Activated naive CD4-positive, alpha-beta T cell treated with anti-CD3 and anti-CD28 coated beads for 36 hours (primary cell): ENCODE measurements at regions of chr1 and their contacts with region 1.

Region 1: DNA sequence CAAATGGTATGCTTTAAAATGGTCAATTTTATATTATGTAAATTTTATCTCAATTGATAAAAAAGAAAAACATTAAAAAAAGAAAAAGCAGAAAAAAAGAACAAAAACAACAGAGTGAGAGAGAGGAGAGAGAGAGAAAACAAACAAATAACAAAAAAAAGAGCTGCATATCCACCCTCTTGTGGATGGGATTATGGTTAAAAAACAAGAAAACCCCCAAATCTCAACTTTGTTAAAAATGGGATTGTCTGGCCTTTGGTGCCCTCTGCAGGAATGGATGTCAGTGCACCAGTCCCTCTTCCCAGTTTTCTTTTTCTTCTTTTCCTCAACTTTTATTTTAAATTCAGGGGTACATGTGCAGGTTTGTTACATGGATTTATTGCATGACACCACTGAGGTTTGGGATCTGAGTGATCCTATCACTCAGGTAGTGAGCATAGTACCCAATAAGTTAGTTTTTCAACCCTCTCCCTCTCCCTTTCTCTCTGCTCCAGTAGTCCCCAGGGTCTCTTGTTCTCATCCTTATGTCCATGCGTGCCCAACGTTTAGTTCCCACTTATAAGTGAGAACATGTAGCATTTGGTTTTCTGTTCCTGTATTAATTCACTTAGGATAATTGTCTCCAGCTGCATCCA is 28.1 kb downstream of the RNF187 start:
- DNase-seq: peak; percentile 60
- H3K4me3 Mint-ChIP-seq: no peak overlapping the region
- H3K27ac Mint-ChIP-seq: no peak overlapping the region
- H3K4me1 Mint-ChIP-seq: peaks cover 4% of the 10 kb centered on the region
- H3K27me3 Mint-ChIP-seq: peaks cover 2% of the 10 kb centered on the region

Region 2: GRCh38 chr1:227999056-227999930 is 516.0 kb before region 1 on chr1:
- CTCF ChIA-PET with region 1: no interaction called
- intact Hi-C with region 1: loop called (anchors 2 kb)
- DNase-seq: peak; percentile 86
- H3K4me3 Mint-ChIP-seq: no peak overlapping the region
- H3K27ac Mint-ChIP-seq: no peak overlapping the region
- H3K4me1 Mint-ChIP-seq: no peaks in the 10 kb centered on the region
- H3K27me3 Mint-ChIP-seq: peaks cover 26% of the 10 kb centered on the region

Region 3: DNA sequence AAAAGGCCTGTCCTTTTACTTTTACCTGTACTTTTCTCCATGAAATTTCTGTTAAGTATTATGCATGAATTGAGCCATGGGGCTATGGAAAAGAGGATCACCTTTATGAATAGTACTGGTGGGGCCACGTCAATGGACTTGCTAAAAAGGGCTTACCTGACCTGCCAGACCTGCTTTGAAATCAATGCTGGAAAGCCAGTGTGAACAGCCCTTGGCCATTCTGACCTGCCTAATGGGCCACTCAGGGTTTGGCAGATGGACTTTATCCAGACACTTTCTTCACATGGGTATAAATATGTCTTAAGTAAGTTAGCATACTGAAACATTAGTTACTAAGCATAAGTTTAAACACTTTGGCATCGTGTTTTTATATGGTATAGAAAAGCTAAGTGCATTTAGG is 383.6 kb before region 1 on chr1:
- CTCF ChIA-PET with region 1: no interaction called
- intact Hi-C with region 1: loop called (anchors 1 kb)
- DNase-seq: no peak
- H3K4me3 Mint-ChIP-seq: no peak overlapping the region
- H3K27ac Mint-ChIP-seq: no peak overlapping the region
- H3K4me1 Mint-ChIP-seq: peaks cover 3% of the 10 kb centered on the region
- H3K27me3 Mint-ChIP-seq: peaks cover 10% of the 10 kb centered on the region

Region 4: DNA sequence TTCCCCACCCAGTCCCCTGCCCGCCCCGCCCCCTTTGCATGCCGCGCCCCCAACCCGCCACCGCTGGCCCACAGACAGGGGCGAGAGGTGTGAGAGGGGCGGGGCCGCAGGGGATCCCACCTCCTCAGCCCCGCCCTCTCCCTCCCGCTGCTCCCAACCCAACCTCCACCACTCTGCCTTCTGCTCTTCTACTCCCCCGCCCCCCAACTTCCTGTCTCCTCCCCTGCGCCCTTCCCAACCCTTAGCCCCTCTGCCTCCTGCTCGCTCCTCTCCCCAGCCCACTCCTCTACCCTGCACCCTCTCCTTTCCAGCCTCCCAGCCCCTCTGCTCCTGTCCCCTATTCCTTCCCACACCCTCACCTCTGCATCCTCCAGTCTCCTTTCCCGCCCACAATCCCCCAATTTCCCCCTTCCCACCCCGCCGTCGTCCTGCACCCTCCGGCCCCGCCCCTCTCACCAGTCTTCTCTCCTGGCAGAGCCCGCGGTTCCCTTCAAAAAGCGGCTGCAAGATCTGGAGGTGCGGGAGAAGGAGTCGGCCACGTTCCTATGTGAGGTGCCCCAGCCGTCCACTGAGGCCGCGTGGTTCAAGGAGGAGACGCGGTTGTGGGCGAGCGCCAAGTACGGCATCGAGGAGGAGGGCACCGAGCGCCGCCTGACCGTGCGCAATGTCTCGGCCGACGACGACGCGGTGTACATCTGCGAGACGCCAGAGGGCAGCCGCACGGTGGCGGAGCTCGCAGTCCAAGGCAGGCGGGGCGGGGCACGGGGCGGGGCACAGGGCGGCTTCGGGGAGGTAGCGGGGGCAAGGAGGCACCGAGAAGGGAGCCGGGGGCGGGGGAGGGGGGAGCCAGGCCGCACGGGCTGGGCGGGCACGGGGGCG is 302.1 kb before region 1 on chr1:
- CTCF ChIA-PET with region 1: no interaction called
- intact Hi-C with region 1: loop called (anchors 2 kb)
- DNase-seq: peak; percentile 92
- H3K4me3 Mint-ChIP-seq: peak overlapping the region; percentile 83
- H3K27ac Mint-ChIP-seq: peak overlapping the region; percentile 50
- H3K4me1 Mint-ChIP-seq: no peaks in the 10 kb centered on the region
- H3K27me3 Mint-ChIP-seq: no peaks in the 10 kb centered on the region

Region 5: GRCh38 chr1:228378090-228378872 is 137.0 kb before region 1 on chr1:
- CTCF ChIA-PET with region 1: interaction called, 3 read pairs
- intact Hi-C with region 1: loop called (anchors 1 kb)
- DNase-seq: peak; percentile 80
- H3K4me3 Mint-ChIP-seq: peak overlapping the region; percentile 74
- H3K27ac Mint-ChIP-seq: no peak overlapping the region
- H3K4me1 Mint-ChIP-seq: peaks cover 11% of the 10 kb centered on the region
- H3K27me3 Mint-ChIP-seq: peaks cover 14% of the 10 kb centered on the region

Region 6: DNA sequence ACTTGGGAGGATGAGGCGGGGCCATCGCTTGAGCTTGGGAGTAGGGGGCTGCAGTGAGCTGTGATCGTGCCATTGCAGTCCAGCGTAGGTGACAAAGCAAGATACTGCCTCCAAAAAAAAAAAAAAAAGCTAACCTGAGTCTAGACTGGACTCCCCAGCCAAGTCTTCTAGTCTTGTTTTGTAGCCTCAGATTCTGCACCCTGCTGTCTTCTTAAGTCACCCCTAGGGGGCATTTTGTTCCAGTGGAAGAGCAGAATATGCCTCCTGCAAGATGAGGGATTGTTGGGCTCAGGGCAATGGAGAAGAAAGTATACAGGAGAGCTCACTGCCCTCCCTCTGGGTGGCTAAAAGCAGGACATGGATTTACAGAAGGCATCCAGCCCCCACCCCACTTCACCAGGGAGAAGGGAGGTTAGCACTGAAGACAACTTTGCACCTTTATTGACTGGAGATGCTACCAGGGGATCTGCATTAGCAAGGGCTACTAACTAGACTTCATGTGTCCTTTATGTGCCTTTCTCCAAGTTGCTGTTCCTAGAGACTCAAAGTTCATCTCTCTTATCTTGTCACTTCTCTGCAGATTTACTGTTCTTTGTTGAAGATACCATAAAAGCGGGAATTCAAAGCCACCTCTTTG is 43.4 kb before region 1 on chr1:
- CTCF ChIA-PET with region 1: interaction called, 11 read pairs
- intact Hi-C with region 1: loop called (anchors 1 kb)
- DNase-seq: peak; percentile 39
- H3K4me3 Mint-ChIP-seq: no peak overlapping the region
- H3K27ac Mint-ChIP-seq: no peak overlapping the region
- H3K4me1 Mint-ChIP-seq: no peaks in the 10 kb centered on the region
- H3K27me3 Mint-ChIP-seq: peaks cover 25% of the 10 kb centered on the region

Region 7: GRCh38 chr1:228493141-228494043 is 21.9 kb before region 1 on chr1:
- CTCF ChIA-PET with region 1: no interaction called
- intact Hi-C with region 1: no loop called
- DNase-seq: no peak
- H3K4me3 Mint-ChIP-seq: no peak overlapping the region
- H3K27ac Mint-ChIP-seq: no peak overlapping the region
- H3K4me1 Mint-ChIP-seq: peaks cover 34% of the 10 kb centered on the region
- H3K27me3 Mint-ChIP-seq: no peaks in the 10 kb centered on the region